Activated T-helper 1 cell treated with anti-CD3 and anti-CD28 coated beads, Interleukin-12 subunit alpha, Interleukin-12 subunit beta, Interleukin-2, Interleukin-4 antibody, amounts not matched to agents 30 ng/mL and 10 ng/mL and 1 ng/mL, durations not matched to agents 14 hours and 24 hours and 36 hours (primary cell): ENCODE measurements at regions of chr16 and their contacts with region 1.

Region 1: DNA sequence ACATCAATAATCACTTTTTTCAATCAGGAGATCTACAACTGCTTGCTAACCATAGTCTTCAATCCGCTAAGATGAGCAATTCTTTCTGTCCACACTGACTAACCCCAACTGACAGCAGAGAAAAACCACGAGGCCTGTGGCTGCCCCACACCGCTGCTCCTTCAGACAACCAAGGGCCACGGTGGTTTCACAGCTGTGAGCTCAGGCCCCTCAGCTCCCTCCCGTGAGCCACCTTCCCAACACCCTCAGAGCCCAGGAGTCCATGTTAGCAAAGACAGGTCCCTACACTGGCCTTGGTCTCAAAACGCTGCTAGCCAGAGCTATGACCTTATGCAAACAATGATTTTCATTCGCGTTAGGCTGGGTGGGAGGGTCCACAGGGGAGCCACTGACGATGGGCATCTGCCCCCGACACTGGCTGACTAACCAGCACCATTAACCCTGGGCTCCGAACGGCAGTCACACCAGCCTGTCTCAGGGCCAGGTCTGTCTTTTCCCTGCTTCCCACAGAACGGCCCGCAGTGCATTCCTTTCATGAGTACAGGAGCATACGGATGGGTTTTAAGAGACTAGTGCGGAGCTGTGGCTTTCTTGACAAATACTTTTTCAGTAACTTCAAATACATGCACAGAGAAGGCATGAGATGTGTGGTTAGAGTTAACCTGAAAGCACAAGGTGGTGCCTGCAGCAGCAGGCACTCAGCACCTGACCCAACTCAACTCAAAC is 67.3 kb downstream of the ANKRD11 start:
- DNase-seq: peak; percentile 46
- H3K4me3 Mint-ChIP-seq: peak overlapping the region; percentile 53
- H3K27ac Mint-ChIP-seq: peak overlapping the region; percentile 92
- H3K4me1 Mint-ChIP-seq: peaks cover 64% of the 10 kb centered on the region
- H3K27me3 Mint-ChIP-seq: no peaks in the 10 kb centered on the region

Region 2: GRCh38 chr16:89331371-89332109 is 91.5 kb before region 1 on chr16:
- intact Hi-C with region 1: loop called (anchors 2 kb)
- DNase-seq: no peak
- H3K4me3 Mint-ChIP-seq: peak overlapping the region; percentile 31
- H3K27ac Mint-ChIP-seq: peak overlapping the region; percentile 2
- H3K4me1 Mint-ChIP-seq: peaks cover 71% of the 10 kb centered on the region
- H3K27me3 Mint-ChIP-seq: no peaks in the 10 kb centered on the region

Region 3: GRCh38 chr16:89442990-89443731 is 20.1 kb after region 1 on chr16:
- intact Hi-C with region 1: loop called (anchors 2 kb)
- DNase-seq: no peak
- H3K4me3 Mint-ChIP-seq: peak overlapping the region; percentile 34
- H3K27ac Mint-ChIP-seq: peak overlapping the region; percentile 50
- H3K4me1 Mint-ChIP-seq: peaks cover 93% of the 10 kb centered on the region
- H3K27me3 Mint-ChIP-seq: no peaks in the 10 kb centered on the region

Region 4: GRCh38 chr16:89484923-89485679 is 62.0 kb after region 1 on chr16:
- intact Hi-C with region 1: loop called (anchors 1 kb)
- DNase-seq: no peak
- H3K4me3 Mint-ChIP-seq: peak overlapping the region; percentile 83
- H3K27ac Mint-ChIP-seq: peak overlapping the region; percentile 91
- H3K4me1 Mint-ChIP-seq: peaks cover 87% of the 10 kb centered on the region
- H3K27me3 Mint-ChIP-seq: no peaks in the 10 kb centered on the region

Region 5: GRCh38 chr16:89602273-89602951 is 179.3 kb after region 1 on chr16:
- intact Hi-C with region 1: no loop called
- DNase-seq: peak; percentile 26
- H3K4me3 Mint-ChIP-seq: no peak overlapping the region
- H3K27ac Mint-ChIP-seq: peak overlapping the region; percentile 7
- H3K4me1 Mint-ChIP-seq: peaks cover 13% of the 10 kb centered on the region
- H3K27me3 Mint-ChIP-seq: no peaks in the 10 kb centered on the region